CD4-positive, alpha-beta T cell (primary cell): ENCODE measurements at regions of chr11 and their contacts with region 1.

Region 1: DNA sequence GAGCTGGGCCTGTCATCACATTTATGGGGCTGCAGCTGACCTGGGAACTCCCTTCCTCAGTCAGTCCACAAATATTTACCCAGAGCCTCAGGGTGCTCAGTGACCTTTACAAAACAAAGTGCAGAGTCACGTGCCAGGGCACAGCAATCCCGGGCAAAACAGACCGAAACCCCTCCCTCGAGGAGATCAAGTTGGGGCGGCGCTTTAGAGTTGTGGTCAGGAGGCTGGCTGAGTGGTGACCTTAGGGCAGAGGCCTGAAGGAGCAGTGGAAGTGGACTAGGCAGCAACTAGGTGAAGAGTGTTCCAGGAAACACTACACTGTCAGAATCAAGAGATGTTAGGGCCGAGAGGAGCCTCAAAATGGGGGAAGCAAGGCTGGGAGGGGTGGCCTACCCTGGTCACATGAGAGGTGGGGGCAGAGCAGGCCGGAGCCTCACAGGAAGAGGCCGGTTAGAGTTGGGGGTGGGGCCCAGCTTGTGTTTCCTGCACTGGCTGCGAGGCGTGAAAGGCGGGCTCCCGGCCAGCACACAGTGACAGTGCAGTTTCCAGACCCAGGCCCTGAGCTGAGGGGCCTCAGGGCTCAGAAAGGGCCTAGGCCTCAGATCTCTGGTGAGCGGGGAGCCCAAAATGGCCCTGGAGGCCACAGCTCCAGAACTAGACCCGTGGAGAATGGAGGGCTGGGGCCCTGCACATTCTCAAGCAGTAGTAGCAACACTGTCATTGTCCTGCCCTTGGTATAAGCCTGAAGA is 3.7 kb upstream of the NEAT1 start:
- DNase-seq: peak in 12 of 14 experiments; percentile 56 to 94 (median 75)
- ATAC-seq: peak; percentile 2
- H3K4me3 ChIP-seq: peak overlapping the region; percentile 86
- H3K4me3 Mint-ChIP-seq: peak overlapping the region; percentile 92
- H3K27ac ChIP-seq: peak overlapping the region; percentile 99
- H3K27ac Mint-ChIP-seq: peak overlapping the region; percentile 96
- H3K4me1 ChIP-seq: peaks cover 74% of the 10 kb centered on the region
- H3K4me1 Mint-ChIP-seq: peaks cover 57% of the 10 kb centered on the region
- H3K27me3 ChIP-seq: no peaks in the 10 kb centered on the region
- H3K27me3 Mint-ChIP-seq: no peaks in the 10 kb centered on the region
- CTCF ChIP-seq: no peak

Region 2: GRCh38 chr11:64571410-64572091 is 847.3 kb before region 1 on chr11:
- CTCF ChIA-PET with region 1: no interaction called
- POLR2A ChIA-PET with region 1: no interaction called
- intact Hi-C with region 1: no loop called
- DNase-seq: no peak
- ATAC-seq: no peak
- H3K4me3 ChIP-seq: no peak overlapping the region
- H3K4me3 Mint-ChIP-seq: no peak overlapping the region
- H3K27ac ChIP-seq: no peak overlapping the region
- H3K27ac Mint-ChIP-seq: no peak overlapping the region
- H3K4me1 ChIP-seq: no peaks in the 10 kb centered on the region
- H3K4me1 Mint-ChIP-seq: peaks cover 3% of the 10 kb centered on the region
- H3K27me3 ChIP-seq: no peaks in the 10 kb centered on the region
- H3K27me3 Mint-ChIP-seq: peaks cover 7% of the 10 kb centered on the region
- CTCF ChIP-seq: no peak

Region 3: DNA sequence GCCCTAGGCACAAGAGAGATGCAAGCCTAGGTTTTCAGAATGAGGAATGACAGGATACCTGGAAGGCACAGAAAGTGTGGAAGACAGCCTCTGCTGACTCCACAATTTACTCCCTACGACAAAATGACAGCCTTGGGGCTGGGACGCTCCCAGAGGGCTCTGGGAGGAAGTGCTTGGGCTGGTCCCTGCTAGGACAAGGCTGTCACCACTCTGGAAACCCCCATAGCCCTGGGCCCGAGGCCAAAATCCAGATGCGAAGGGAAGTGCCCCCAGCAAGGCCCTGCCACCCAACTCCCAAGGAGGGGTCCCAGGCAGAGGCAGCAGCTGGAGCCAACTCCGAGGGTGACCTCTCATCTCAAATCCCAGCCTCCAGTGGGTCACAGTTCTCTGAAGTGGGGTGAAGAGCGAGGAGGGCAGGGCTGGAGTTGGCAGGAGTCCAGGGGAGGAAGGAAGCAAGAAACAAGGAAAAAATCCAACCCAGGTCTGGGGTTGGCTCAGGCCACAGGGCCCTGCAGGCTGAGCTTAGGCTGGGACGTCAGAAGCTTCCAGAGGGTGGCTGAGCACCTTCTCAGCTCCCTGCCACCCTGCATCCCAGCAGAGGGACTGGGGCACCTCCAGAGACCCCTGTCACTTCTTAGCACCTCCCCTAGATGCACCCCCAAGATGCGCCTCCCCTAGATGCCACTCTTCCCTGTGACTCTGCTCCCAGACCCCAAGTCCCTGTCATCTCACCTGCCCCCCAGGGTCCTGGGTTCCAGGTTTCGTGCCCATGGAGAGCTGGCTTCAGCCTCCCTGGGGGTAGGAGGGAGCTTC is 110.4 kb before region 1 on chr11:
- CTCF ChIA-PET with region 1: no interaction called
- POLR2A ChIA-PET with region 1: no interaction called
- intact Hi-C with region 1: no loop called
- DNase-seq: peak in 2 of 14 experiments; percentile 64 to 67
- ATAC-seq: no peak
- H3K4me3 ChIP-seq: no peak overlapping the region
- H3K4me3 Mint-ChIP-seq: no peak overlapping the region
- H3K27ac ChIP-seq: no peak overlapping the region
- H3K27ac Mint-ChIP-seq: no peak overlapping the region
- H3K4me1 ChIP-seq: no peaks in the 10 kb centered on the region
- H3K4me1 Mint-ChIP-seq: no peaks in the 10 kb centered on the region
- H3K27me3 ChIP-seq: no peaks in the 10 kb centered on the region
- H3K27me3 Mint-ChIP-seq: no peaks in the 10 kb centered on the region
- CTCF ChIP-seq: no peak

Region 4: DNA sequence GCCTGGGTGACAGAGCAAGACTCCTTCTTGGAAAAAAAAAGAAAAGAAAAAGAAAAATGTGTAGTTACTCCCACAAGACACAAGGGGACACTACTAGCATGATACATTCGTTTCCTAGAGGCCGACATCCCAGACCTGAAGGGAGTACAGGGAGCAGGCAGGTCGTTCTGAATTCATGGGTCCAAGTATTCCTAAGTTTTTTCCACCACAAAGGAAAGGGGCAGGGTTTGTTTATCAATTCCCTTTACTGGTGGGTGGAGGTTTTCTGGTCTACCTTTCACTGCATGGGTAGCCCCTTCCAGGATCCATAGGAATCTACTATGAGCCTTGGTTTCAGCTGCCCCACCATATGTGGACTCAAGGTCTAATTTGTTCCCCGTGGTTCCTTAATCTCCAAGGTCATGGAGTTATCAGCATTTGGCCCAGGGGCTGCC is 52.5 kb before region 1 on chr11:
- CTCF ChIA-PET with region 1: interaction called, 4 read pairs
- POLR2A ChIA-PET with region 1: interaction called, 3 read pairs
- intact Hi-C with region 1: loop called in 1 of 2 experiments (anchors 5 kb)
- DNase-seq: peak in 4 of 14 experiments; percentile 49 to 78 (median 78)
- ATAC-seq: peak; percentile 85
- H3K4me3 ChIP-seq: no peak overlapping the region
- H3K4me3 Mint-ChIP-seq: no peak overlapping the region
- H3K27ac ChIP-seq: no peak overlapping the region
- H3K27ac Mint-ChIP-seq: no peak overlapping the region
- H3K4me1 ChIP-seq: peaks cover 8% of the 10 kb centered on the region
- H3K4me1 Mint-ChIP-seq: peaks cover 7% of the 10 kb centered on the region
- H3K27me3 ChIP-seq: no peaks in the 10 kb centered on the region
- H3K27me3 Mint-ChIP-seq: no peaks in the 10 kb centered on the region
- CTCF ChIP-seq: peak; percentile 78

Region 5: DNA sequence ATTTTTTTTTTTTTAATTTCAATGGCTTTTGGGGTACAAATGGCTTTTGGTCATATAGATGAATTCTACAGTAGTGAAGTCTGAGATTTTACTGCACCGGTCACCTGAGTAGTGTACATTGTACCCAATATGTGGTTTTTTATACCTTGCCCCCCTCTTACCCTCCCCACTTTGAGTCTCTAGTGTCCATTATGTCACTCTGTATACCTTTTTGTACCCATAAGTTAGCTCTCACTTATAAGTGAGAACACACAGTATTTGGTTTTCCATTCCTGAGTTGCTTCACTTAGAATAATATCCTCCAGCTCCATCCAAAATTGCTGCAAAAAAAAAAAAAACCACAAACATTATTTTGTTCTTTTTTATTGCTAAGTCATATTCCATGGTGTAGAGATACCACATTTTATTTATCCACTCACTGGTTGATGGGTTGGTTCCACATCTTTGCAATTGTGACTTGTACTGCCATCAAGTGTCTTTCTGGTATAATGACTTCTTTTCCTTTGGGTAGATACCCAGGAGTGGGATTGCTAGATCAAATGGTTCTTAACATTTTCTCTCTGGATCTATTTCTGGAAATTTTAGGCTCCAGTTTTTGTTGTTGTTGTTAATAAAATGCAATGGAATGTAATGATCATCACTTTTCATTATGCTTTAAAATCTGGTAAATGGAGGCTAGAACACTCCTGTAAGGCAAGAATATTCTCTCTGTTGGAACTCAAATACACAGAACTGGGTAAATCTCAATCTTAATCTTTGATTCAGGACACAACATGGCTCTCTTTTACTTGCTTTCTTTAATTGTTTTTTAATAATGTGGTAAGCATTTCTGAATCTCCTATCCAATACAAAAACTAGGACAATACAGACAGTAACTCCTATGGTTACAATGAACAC is 14.0 kb after region 1 on chr11:
- CTCF ChIA-PET with region 1: interaction called, 32 read pairs
- POLR2A ChIA-PET with region 1: interaction called, 260 read pairs
- intact Hi-C with region 1: loop called (anchors 1 kb)
- DNase-seq: peak in 3 of 14 experiments; percentile 75 to 78 (median 77)
- ATAC-seq: peak; percentile 45
- H3K4me3 ChIP-seq: no peak overlapping the region
- H3K4me3 Mint-ChIP-seq: peak overlapping the region; percentile 74
- H3K27ac ChIP-seq: peak overlapping the region in 1 of 2 donors; percentile 37
- H3K27ac Mint-ChIP-seq: peak overlapping the region; percentile 89
- H3K4me1 ChIP-seq: peaks cover 48% of the 10 kb centered on the region
- H3K4me1 Mint-ChIP-seq: peaks cover 90% of the 10 kb centered on the region
- H3K27me3 ChIP-seq: no peaks in the 10 kb centered on the region
- H3K27me3 Mint-ChIP-seq: no peaks in the 10 kb centered on the region
- CTCF ChIP-seq: peak; percentile 74

Region 6: DNA sequence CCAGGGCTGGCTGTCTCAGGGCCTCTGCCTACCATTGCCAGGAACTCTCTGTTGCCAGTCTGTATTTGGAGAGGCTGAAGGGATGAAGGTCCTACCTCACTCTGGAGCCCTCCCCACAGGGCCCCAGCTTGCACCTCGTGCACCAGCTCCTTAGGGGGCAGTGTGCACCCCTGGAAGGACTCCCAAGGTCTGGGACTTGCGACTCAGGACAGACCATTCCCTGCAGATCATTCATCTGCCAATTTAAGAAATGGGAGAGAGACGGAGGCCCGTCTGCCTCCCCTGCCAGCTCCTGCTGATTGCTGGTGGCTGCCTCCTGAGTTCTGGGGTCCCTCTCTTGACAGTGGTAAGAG is 52.5 kb after region 1 on chr11:
- CTCF ChIA-PET with region 1: interaction called, 46 read pairs
- POLR2A ChIA-PET with region 1: interaction called, 110 read pairs
- intact Hi-C with region 1: loop called (anchors 1 to 2 kb)
- DNase-seq: peak in 5 of 14 experiments; percentile 15 to 64 (median 32)
- ATAC-seq: no peak
- H3K4me3 ChIP-seq: peak overlapping the region; percentile 3
- H3K4me3 Mint-ChIP-seq: no peak overlapping the region
- H3K27ac ChIP-seq: peak overlapping the region; percentile 72 to 76
- H3K27ac Mint-ChIP-seq: peak overlapping the region; percentile 92
- H3K4me1 ChIP-seq: peaks cover 26% of the 10 kb centered on the region
- H3K4me1 Mint-ChIP-seq: peaks cover 16% of the 10 kb centered on the region
- H3K27me3 ChIP-seq: no peaks in the 10 kb centered on the region
- H3K27me3 Mint-ChIP-seq: no peaks in the 10 kb centered on the region
- CTCF ChIP-seq: no peak

Region 7: DNA sequence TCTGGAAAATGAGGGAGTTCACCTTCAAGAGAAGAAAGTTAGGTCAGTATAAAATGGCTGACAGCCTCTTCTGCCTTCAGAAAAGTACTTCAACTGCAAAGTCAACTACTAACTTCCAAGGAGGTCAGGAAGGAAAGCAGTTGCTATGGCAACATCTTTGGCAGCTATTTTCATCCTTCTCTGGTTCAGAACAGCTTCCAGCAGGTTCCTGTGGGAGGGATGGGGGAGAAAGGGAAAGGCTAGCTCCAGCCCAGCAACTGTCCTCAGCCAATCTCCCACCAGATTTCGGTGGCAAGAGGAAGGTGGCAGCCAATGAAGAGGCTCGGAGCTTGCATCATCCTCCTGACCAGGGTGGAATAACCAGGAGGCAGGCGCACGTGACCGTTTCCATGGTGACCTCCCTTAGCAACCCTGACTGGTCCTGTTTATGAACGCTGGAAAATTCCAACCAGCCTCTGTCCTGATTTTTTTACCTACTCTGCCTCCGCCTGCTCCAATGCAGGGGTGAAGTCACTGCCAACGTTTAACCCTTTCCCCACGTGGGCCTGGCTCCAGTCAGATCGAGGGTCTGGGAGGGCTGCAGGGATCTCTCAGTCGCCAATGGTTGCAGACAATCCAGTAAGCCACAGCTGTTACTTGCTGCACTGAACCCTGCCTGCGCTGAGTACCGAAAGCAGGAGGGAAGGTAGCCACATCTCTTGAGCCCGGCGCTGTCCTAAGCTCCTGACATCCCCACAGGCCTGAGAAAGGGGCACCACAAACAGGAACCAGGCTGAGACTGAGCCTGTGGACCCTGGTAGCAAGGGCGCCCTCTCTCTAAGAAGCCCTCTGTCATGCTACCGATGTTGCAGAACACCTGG is 68.8 kb after region 1 on chr11:
- CTCF ChIA-PET with region 1: interaction called, 3 read pairs
- POLR2A ChIA-PET with region 1: interaction called, 14 read pairs
- intact Hi-C with region 1: no loop called
- DNase-seq: peak in 4 of 14 experiments; percentile 34 to 80 (median 60)
- ATAC-seq: peak; percentile 59
- H3K4me3 ChIP-seq: no peak overlapping the region
- H3K4me3 Mint-ChIP-seq: peak overlapping the region; percentile 34
- H3K27ac ChIP-seq: no peak overlapping the region
- H3K27ac Mint-ChIP-seq: peak overlapping the region; percentile 58
- H3K4me1 ChIP-seq: peaks cover 28% of the 10 kb centered on the region
- H3K4me1 Mint-ChIP-seq: peaks cover 24% of the 10 kb centered on the region
- H3K27me3 ChIP-seq: no peaks in the 10 kb centered on the region
- H3K27me3 Mint-ChIP-seq: no peaks in the 10 kb centered on the region
- CTCF ChIP-seq: no peak

Region 8: DNA sequence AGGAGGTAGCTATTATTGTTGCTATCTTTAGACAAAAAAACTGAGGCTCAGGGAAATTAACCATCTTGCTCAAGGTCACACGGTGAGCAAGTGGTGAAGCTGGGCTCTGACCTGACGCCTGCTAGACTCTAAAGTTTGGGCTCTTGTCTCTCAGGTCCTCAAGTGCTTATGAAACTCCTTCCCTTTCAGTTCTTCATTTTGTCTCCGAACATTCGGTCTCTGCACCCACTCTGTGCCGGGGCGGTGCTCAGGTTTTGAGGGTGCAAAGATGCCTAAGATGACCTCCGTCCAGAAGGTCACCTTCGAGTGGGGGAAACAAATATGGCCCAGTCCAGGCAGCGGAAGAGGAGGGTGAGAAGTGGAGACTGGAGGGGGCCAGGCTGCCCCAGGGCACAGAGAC is 384.0 kb after region 1 on chr11:
- CTCF ChIA-PET with region 1: no interaction called
- POLR2A ChIA-PET with region 1: no interaction called
- intact Hi-C with region 1: no loop called
- DNase-seq: no peak
- ATAC-seq: no peak
- H3K4me3 ChIP-seq: no peak overlapping the region
- H3K4me3 Mint-ChIP-seq: no peak overlapping the region
- H3K27ac ChIP-seq: no peak overlapping the region
- H3K27ac Mint-ChIP-seq: no peak overlapping the region
- H3K4me1 ChIP-seq: no peaks in the 10 kb centered on the region
- H3K4me1 Mint-ChIP-seq: no peaks in the 10 kb centered on the region
- H3K27me3 ChIP-seq: peaks cover 15 to 26% of the 10 kb centered on the region in 2 experiments
- H3K27me3 Mint-ChIP-seq: peaks cover 33% of the 10 kb centered on the region
- CTCF ChIP-seq: no peak